ENCODE measurements at regions of chr14 and their contacts with region 1.

Region 1: GRCh38 chr14:93184388-93185353 is at the starts of genes LYSET and MOAP1:
- DNase-seq: peak; percentile 97
- ATAC-seq: peak; percentile 86
- H3K4me3 ChIP-seq: peak within 1 kb of the TSS; percentile 85 to 96 (median 90)
- H3K4me3 Mint-ChIP-seq: peak within 1 kb of the TSS; percentile 97
- H3K27ac ChIP-seq: peak within 1 kb of the TSS; percentile 97 to 98
- H3K27ac Mint-ChIP-seq: peak within 1 kb of the TSS; percentile 98
- H3K4me1 ChIP-seq: peaks cover 16 to 26% of the 10 kb centered on the region in 2 donors
- H3K4me1 Mint-ChIP-seq: peaks cover 32% of the 10 kb centered on the region
- H3K27me3 ChIP-seq: no peaks in the 10 kb centered on the region
- H3K27me3 Mint-ChIP-seq: no peaks in the 10 kb centered on the region
- CTCF ChIP-seq: peak; percentile 20
- total RNA-seq, gene LYSET: 18.0 and 18.8 TPM in 2 replicates
- total RNA-seq, gene MOAP1: 30.8 and 31.2 TPM in 2 replicates

Region 2: DNA sequence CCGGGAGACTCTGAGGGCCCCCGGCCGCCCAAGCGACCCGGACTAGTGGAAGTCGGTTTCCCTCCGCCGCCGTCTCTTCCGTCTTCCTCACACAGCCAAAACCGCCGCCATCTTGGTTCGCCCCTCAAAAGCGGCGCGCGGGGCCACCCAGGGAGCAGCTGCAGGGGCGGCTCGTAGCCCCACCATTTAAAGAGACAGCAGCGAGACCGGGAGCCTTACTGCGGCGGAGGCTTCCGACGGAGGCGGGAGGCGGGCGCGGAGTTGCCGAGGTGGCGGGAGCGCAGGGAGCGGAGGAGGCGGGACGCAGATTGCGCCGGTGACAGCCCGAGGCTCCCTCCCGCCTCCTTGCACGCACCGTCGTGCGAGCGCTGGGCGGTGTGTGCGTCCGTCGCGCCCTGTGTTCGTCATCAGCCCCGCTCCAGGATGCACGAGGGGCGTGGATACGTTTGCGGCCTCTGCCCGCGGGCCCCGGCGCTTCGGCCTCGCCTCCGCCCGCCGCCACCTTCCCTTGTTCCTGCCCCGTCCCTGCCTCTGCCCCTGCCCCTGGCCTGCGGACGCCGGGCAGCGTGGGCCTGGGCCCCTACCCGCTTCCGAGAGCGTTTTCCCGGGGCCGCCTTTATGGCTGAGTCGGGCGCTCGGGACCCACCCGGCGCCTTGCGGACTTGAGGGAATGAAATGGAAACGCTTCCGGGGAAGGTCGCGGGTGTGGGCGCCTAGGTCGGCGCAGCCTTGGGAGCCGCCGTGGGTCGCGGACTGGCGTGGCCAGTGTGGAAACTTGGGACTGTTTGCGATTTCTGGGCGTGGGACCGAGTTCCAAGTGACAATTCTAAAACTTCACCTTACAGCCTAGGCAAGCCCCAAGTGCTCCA is 1674.3 kb before region 1 on chr14 and contains the start of gene PPP4R3A:
- CTCF ChIA-PET with region 1: no interaction called
- POLR2A ChIA-PET with region 1: no interaction called
- intact Hi-C with region 1: loop called (anchors 5 kb)
- DNase-seq: peak; percentile 97
- ATAC-seq: peak; percentile 87
- H3K4me3 ChIP-seq: peak within 1 kb of the TSS; percentile 72 to 99 (median 84)
- H3K4me3 Mint-ChIP-seq: peak within 1 kb of the TSS; percentile 99
- H3K27ac ChIP-seq: peak within 1 kb of the TSS; percentile 97 to 100
- H3K27ac Mint-ChIP-seq: peak within 1 kb of the TSS; percentile 100
- H3K4me1 ChIP-seq: peaks cover 32% of the 10 kb centered on the region in 2 donors
- H3K4me1 Mint-ChIP-seq: peaks cover 37% of the 10 kb centered on the region
- H3K27me3 ChIP-seq: no peaks in the 10 kb centered on the region
- H3K27me3 Mint-ChIP-seq: no peaks in the 10 kb centered on the region
- CTCF ChIP-seq: no peak
- total RNA-seq, gene PPP4R3A: 184 and 189 TPM in 2 replicates

Region 3: DNA sequence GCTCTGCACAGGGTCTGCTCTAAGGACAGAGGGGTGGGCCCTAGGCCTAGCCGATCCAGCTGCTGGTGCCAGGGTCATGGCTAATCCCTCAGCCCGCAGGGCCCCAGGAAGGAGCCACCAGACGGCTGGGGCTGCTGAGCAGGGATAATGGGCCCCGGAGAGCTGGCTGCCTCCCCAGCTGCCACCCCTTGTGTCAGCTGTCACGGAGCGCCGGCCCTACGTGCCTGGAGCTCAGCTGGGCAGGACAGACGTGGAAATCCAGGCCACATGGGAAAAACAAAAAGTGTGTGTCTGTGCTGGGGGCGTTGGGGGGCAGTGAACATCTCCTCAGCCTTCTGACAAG is 225.5 kb before region 1 on chr14:
- CTCF ChIA-PET with region 1: no interaction called
- POLR2A ChIA-PET with region 1: no interaction called
- intact Hi-C with region 1: no loop called
- DNase-seq: no peak
- ATAC-seq: no peak
- H3K4me3 ChIP-seq: no peak overlapping the region
- H3K4me3 Mint-ChIP-seq: no peak overlapping the region
- H3K27ac ChIP-seq: no peak overlapping the region
- H3K27ac Mint-ChIP-seq: no peak overlapping the region
- H3K4me1 ChIP-seq: no peaks in the 10 kb centered on the region
- H3K4me1 Mint-ChIP-seq: no peaks in the 10 kb centered on the region
- H3K27me3 ChIP-seq: no peaks in the 10 kb centered on the region
- H3K27me3 Mint-ChIP-seq: no peaks in the 10 kb centered on the region
- CTCF ChIP-seq: no peak

Region 4: DNA sequence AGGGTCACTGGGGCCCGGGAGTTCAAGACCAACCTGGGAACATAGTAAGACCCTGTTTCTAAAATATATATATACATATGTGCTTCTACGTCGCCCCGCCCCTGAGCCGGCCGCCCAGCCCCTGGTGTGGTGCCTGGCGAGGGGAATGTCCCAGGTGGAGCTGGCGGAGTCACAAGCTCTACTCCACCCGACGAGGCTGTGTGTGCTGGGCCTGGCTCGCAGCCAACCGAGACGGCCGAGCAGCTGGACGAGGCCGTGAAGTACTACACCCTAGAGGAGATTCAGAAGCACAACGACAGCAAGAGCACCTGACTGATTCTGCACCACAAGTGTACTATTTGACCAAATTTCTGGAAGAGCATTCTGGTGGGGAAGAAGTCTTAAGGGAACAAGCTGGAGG is 46.8 kb before region 1 on chr14:
- CTCF ChIA-PET with region 1: interaction called, 5 read pairs
- POLR2A ChIA-PET with region 1: no interaction called
- intact Hi-C with region 1: loop called (anchors 1 kb)
- DNase-seq: no peak
- ATAC-seq: no peak
- H3K4me3 ChIP-seq: no peak overlapping the region
- H3K4me3 Mint-ChIP-seq: no peak overlapping the region
- H3K27ac ChIP-seq: no peak overlapping the region
- H3K27ac Mint-ChIP-seq: no peak overlapping the region
- H3K4me1 ChIP-seq: no peaks in the 10 kb centered on the region
- H3K4me1 Mint-ChIP-seq: peaks cover 2% of the 10 kb centered on the region
- H3K27me3 ChIP-seq: no peaks in the 10 kb centered on the region
- H3K27me3 Mint-ChIP-seq: no peaks in the 10 kb centered on the region
- CTCF ChIP-seq: no peak

Region 5: DNA sequence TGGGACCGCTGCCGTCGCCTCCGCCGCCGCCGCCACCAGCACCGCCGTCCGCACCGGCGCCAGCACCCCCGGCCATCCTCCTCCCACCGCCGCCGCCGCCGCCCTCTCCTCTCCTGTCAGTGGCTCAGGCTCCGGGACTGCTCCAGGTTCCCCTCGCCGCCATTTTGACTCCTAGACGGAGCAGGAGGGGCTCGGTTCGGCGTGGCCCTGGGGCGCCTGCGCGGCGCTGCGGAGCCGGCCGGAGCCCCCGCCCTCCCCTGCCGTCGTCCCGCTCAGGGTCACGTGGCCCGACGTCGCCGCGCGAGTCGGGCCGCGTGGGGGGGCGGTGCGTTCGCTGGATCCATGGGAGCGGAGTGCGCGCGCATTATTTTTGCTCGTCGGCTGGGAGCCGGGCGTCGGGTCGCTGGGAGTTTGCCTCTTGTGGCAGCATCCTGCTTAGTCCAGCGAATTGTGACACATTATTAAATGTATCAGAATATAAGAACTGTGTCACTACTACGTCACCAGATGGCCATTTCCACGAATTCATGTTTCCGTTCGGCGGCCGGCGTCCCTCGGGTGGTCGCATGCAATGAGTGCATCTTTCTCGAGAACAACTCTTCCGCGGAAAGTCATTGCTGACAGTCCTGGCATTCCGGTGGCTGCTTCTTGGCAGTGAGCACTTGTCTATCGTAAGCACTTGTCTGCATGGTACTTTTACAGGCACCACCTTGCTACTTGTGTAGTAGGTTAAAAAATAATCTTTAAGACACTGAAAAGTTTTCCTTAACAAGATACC is 148.4 kb after region 1 on chr14 and contains the start of gene BTBD7:
- CTCF ChIA-PET with region 1: no interaction called
- POLR2A ChIA-PET with region 1: no interaction called
- intact Hi-C with region 1: loop called (anchors 1 kb)
- DNase-seq: peak; percentile 96
- ATAC-seq: peak; percentile 90
- H3K4me3 ChIP-seq: peak within 1 kb of the TSS; percentile 66 to 95 (median 82)
- H3K4me3 Mint-ChIP-seq: peak within 1 kb of the TSS; percentile 92
- H3K27ac ChIP-seq: peak within 1 kb of the TSS; percentile 59 to 92
- H3K27ac Mint-ChIP-seq: peak within 1 kb of the TSS; percentile 95
- H3K4me1 ChIP-seq: peaks cover 19 to 31% of the 10 kb centered on the region in 2 donors
- H3K4me1 Mint-ChIP-seq: peaks cover 49% of the 10 kb centered on the region
- H3K27me3 ChIP-seq: no peaks in the 10 kb centered on the region
- H3K27me3 Mint-ChIP-seq: no peaks in the 10 kb centered on the region
- CTCF ChIP-seq: no peak
- total RNA-seq, gene BTBD7: 48.6 and 49.0 TPM in 2 replicates

Region 6: GRCh38 chr14:94173885-94174603 is 989.4 kb after region 1 on chr14 and contains the start of gene PPP4R4:
- CTCF ChIA-PET with region 1: no interaction called
- POLR2A ChIA-PET with region 1: no interaction called
- intact Hi-C with region 1: loop called (anchors 10 kb)
- DNase-seq: peak; percentile 82
- ATAC-seq: peak; percentile 92
- H3K4me3 ChIP-seq: peak within 1 kb of the TSS in 4 of 5 experiments; percentile 46 to 66 (median 61)
- H3K4me3 Mint-ChIP-seq: peak within 1 kb of the TSS; percentile 88
- H3K27ac ChIP-seq: no peak within 1 kb of the TSS
- H3K27ac Mint-ChIP-seq: peak within 1 kb of the TSS; percentile 50
- H3K4me1 ChIP-seq: peaks cover 17 to 19% of the 10 kb centered on the region in 2 donors
- H3K4me1 Mint-ChIP-seq: peaks cover 15% of the 10 kb centered on the region
- H3K27me3 ChIP-seq: peaks cover 0 to 49% (median 35%) of the 10 kb centered on the region in 4 experiments
- H3K27me3 Mint-ChIP-seq: peaks cover 50% of the 10 kb centered on the region
- CTCF ChIP-seq: no peak
- total RNA-seq, gene PPP4R4: not detected in 2 replicates

Measured in B cell (primary cell).